ENCODE measurements at regions of chr14 and their contacts with region 1.

Region 1: GRCh38 chr14:67599698-67600561 is at the start of gene PIGH:
- DNase-seq: peak; percentile 95

Region 2: DNA sequence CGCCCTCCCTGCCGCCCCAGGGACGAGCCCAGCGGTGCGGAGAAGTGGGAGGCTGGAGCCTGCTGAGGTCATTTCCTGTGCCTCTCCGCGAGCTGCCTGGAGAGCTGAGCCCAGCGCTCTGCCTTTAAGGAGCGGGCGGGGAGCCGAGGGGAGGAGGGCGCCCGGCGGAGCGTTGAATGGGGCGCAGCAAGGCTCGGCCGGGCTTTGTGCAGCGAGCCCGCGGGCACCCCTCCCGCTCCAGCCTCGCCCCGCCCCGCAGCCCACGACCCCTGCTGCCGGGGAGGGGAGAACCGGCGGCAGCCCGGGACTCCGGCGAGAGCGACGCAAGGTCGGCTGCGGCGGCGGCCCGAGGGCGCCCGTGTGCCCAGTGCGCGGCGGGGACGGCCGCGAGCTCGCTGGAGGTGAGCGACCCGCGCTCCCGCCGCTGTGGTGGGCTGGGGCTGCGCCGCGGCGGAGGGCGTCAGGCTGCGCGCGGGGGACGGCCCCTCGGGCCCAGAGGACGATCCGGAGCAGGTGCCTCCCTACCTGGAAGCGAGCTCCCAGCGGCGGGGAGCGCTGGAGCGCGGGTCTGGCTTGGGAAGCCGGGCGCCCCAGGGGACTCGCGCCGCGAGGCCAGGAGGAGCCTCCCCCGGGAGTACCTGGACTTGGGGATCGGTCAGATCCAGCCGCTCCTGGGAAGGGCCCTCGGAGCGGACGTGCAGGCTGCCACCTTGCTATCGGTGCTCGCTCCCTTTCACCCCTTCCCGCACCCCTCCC is 66.8 kb before region 1 on chr14 and contains the start of gene PLEKHH1:
- CTCF ChIA-PET with region 1: no interaction called
- POLR2A ChIA-PET with region 1: interaction called, 14 read pairs
- DNase-seq: peak; percentile 81

Region 3: DNA sequence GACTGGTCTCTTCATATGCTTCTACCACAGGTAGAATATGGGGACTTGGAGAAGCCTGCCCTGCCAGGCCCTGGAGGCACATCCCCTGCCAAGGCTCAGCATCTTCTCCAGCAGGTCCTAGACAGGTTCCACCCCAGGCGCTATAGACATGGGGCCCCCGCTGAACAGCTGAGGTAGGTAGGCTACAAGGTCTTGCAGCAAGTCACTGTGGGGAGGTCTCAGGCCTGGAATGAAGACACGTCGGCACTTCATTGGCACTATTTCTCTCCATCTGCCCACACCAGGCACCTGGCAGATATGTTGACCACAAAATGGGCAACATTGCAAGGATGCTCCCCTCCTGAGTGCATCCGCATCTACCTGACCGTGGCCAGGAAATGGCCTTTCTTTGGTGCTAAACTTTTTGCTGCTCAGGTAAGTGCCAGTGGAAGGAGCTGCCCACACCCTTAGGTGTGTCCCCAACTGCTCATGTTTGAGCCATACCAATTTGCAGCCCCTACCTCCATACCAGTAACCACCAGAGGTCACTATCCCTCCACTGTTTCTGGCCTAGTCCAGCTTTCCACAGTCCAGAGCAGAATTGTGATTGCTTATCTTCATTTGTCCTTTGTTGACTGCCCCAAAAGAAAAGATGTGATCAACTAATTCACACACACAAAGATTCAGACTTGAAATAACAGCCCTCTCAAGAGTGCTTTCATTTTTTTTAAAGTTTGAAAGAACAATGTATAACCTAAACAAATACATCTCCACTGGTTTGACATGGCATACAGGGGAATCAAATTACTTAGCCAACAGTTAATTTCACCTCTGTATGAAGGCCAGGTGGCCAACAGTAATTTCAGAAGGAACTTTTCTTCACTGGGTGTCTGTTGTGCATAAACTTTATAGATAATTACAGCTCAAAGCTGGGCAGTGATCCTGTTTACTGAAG is 16.0 kb before region 1 on chr14:
- CTCF ChIA-PET with region 1: interaction called, 8 read pairs
- POLR2A ChIA-PET with region 1: interaction called, 20 read pairs
- DNase-seq: peak; percentile 74

Region 4: GRCh38 chr14:67610491-67610890 is 10.6 kb after region 1 on chr14:
- CTCF ChIA-PET with region 1: interaction called, 8 read pairs
- POLR2A ChIA-PET with region 1: interaction called, 15 read pairs
- DNase-seq: no peak

Region 5: DNA sequence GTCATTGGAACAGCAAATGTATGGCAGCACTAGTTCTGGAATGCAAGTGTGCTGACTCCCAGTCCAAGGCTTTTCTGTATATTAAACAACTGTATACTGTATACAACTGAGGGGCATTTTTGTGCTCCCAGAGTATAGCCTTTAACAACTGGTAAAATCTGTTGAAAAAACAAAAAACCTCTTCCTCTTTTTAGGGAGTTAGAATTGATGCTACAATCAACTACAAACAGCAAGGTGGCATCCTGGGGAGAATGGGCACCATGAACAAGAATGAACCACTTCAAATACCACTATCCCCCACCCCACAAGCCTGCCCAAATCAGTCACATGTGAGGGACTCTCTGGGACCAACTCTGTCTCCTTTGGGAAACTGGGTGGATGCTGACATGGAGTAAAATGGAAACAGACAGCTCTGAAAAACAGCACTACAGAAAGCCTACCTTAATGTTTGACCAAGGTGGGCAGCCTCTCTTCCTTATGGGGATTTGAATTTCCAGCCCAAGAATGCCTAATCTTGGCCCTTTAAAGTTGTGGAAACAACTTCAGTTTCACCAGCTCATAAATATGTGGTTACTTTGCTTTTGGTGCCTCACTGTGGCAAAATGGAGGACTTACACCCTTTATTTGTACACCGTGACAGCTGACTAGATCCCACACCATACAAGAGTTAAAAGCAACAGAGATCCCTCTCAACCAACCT is 67.0 kb after region 1 on chr14:
- CTCF ChIA-PET with region 1: interaction called, 7 read pairs
- POLR2A ChIA-PET with region 1: interaction called, 10 read pairs
- DNase-seq: peak; percentile 57

Region 6: GRCh38 chr14:67704484-67705089 is 104.7 kb after region 1 on chr14:
- CTCF ChIA-PET with region 1: interaction called, 17 read pairs
- POLR2A ChIA-PET with region 1: interaction called, 6 read pairs
- DNase-seq: peak; percentile 62

Measured in HEK293T (cell line).